ENCODE measurements at regions of chr11 and their contacts with region 1.

Region 1: GRCh38 chr11:3091791-3092602 is 34.8 kb upstream of the CARS1 start:
- DNase-seq: peak; percentile 64 to 74 (median 68)
- H3K4me3 ChIP-seq: no peak overlapping the region
- H3K4me3 Mint-ChIP-seq: no peak overlapping the region
- H3K27ac ChIP-seq: no peak overlapping the region
- H3K27ac Mint-ChIP-seq: no peak overlapping the region
- H3K4me1 ChIP-seq: no peaks in the 10 kb centered on the region
- H3K4me1 Mint-ChIP-seq: no peaks in the 10 kb centered on the region
- H3K27me3 ChIP-seq: no peaks in the 10 kb centered on the region
- H3K27me3 Mint-ChIP-seq: peaks cover 0 to 3% of the 10 kb centered on the region in 2 donors

Region 2: GRCh38 chr11:2885676-2886081 is 206.3 kb before region 1 on chr11 and contains the start of gene CDKN1C:
- CTCF ChIA-PET with region 1: interaction called, 19 read pairs
- POLR2A ChIA-PET with region 1: interaction called, 3 read pairs
- intact Hi-C with region 1: no loop called
- DNase-seq: peak; percentile 86 to 88 (median 86)
- H3K4me3 ChIP-seq: peak within 1 kb of the TSS; percentile 61 to 86
- H3K4me3 Mint-ChIP-seq: peak within 1 kb of the TSS; percentile 87 to 97 (median 94)
- H3K27ac ChIP-seq: peak within 1 kb of the TSS; percentile 10
- H3K27ac Mint-ChIP-seq: peak within 1 kb of the TSS; percentile 61 to 93 (median 84)
- H3K4me1 ChIP-seq: peaks cover 17% of the 10 kb centered on the region
- H3K4me1 Mint-ChIP-seq: peaks cover 2 to 28% (median 16%) of the 10 kb centered on the region in 4 donors
- H3K27me3 ChIP-seq: no peaks in the 10 kb centered on the region
- H3K27me3 Mint-ChIP-seq: no peaks in the 10 kb centered on the region
- total RNA-seq, gene CDKN1C: 4.9 to 6.1 TPM

Region 3: GRCh38 chr11:2930704-2931428 is 161.1 kb before region 1 on chr11:
- CTCF ChIA-PET with region 1: interaction called, 18 read pairs
- POLR2A ChIA-PET with region 1: no interaction called
- intact Hi-C with region 1: no loop called
- DNase-seq: peak in 1 of 5 donors; percentile 30
- H3K4me3 ChIP-seq: peak overlapping the region; percentile 54 to 59
- H3K4me3 Mint-ChIP-seq: peak overlapping the region; percentile 65 to 89 (median 83)
- H3K27ac ChIP-seq: no peak overlapping the region
- H3K27ac Mint-ChIP-seq: peak overlapping the region in 6 of 7 donors; percentile 78 to 92 (median 84)
- H3K4me1 ChIP-seq: peaks cover 40% of the 10 kb centered on the region
- H3K4me1 Mint-ChIP-seq: peaks cover 12 to 44% (median 17%) of the 10 kb centered on the region in 4 donors
- H3K27me3 ChIP-seq: no peaks in the 10 kb centered on the region
- H3K27me3 Mint-ChIP-seq: peaks cover 3 to 4% of the 10 kb centered on the region in 2 donors

Region 4: GRCh38 chr11:2992234-2992996 is 99.6 kb before region 1 on chr11 and contains the start of gene NAP1L4:
- CTCF ChIA-PET with region 1: no interaction called
- POLR2A ChIA-PET with region 1: no interaction called
- intact Hi-C with region 1: no loop called
- DNase-seq: peak; percentile 94 to 97 (median 95)
- H3K4me3 ChIP-seq: peak within 1 kb of the TSS; percentile 76 to 90
- H3K4me3 Mint-ChIP-seq: peak within 1 kb of the TSS; percentile 96 to 100 (median 98)
- H3K27ac ChIP-seq: peak within 1 kb of the TSS; percentile 84
- H3K27ac Mint-ChIP-seq: peak within 1 kb of the TSS; percentile 97 to 99 (median 99)
- H3K4me1 ChIP-seq: peaks cover 31% of the 10 kb centered on the region
- H3K4me1 Mint-ChIP-seq: peaks cover 12 to 57% (median 25%) of the 10 kb centered on the region in 4 donors
- H3K27me3 ChIP-seq: no peaks in the 10 kb centered on the region
- H3K27me3 Mint-ChIP-seq: peaks cover 0 to 2% of the 10 kb centered on the region in 2 donors
- total RNA-seq, gene NAP1L4: 299 to 303 TPM

Region 5: GRCh38 chr11:3014057-3014938 is 77.7 kb before region 1 on chr11:
- CTCF ChIA-PET with region 1: interaction called, 24 read pairs
- POLR2A ChIA-PET with region 1: interaction called, 3 read pairs
- intact Hi-C with region 1: no loop called
- DNase-seq: peak; percentile 88 to 93 (median 90)
- H3K4me3 ChIP-seq: peak overlapping the region in 1 of 2 donors; percentile 11
- H3K4me3 Mint-ChIP-seq: peak overlapping the region; percentile 43 to 84 (median 74)
- H3K27ac ChIP-seq: peak overlapping the region; percentile 39
- H3K27ac Mint-ChIP-seq: peak overlapping the region; percentile 85 to 95 (median 90)
- H3K4me1 ChIP-seq: peaks cover 51% of the 10 kb centered on the region
- H3K4me1 Mint-ChIP-seq: peaks cover 21 to 74% (median 37%) of the 10 kb centered on the region in 4 donors
- H3K27me3 ChIP-seq: no peaks in the 10 kb centered on the region
- H3K27me3 Mint-ChIP-seq: no peaks in the 10 kb centered on the region

Region 6: GRCh38 chr11:3049430-3050243 is 42.4 kb before region 1 on chr11:
- CTCF ChIA-PET with region 1: interaction called, 23 read pairs
- POLR2A ChIA-PET with region 1: interaction called, 12 read pairs
- intact Hi-C with region 1: loop called (anchors 1 kb)
- DNase-seq: peak; percentile 64 to 91 (median 76)
- H3K4me3 ChIP-seq: no peak overlapping the region
- H3K4me3 Mint-ChIP-seq: peak overlapping the region in 7 of 8 donors; percentile 0 to 86 (median 76)
- H3K27ac ChIP-seq: peak overlapping the region; percentile 82
- H3K27ac Mint-ChIP-seq: peak overlapping the region; percentile 92 to 99 (median 96)
- H3K4me1 ChIP-seq: peaks cover 35% of the 10 kb centered on the region
- H3K4me1 Mint-ChIP-seq: peaks cover 26 to 51% (median 38%) of the 10 kb centered on the region in 4 donors
- H3K27me3 ChIP-seq: no peaks in the 10 kb centered on the region
- H3K27me3 Mint-ChIP-seq: no peaks in the 10 kb centered on the region

Region 7: GRCh38 chr11:3123761-3124733 is 32.0 kb after region 1 on chr11:
- CTCF ChIA-PET with region 1: no interaction called
- POLR2A ChIA-PET with region 1: no interaction called
- intact Hi-C with region 1: no loop called
- DNase-seq: no peak
- H3K4me3 ChIP-seq: no peak overlapping the region
- H3K4me3 Mint-ChIP-seq: no peak overlapping the region
- H3K27ac ChIP-seq: no peak overlapping the region
- H3K27ac Mint-ChIP-seq: no peak overlapping the region
- H3K4me1 ChIP-seq: no peaks in the 10 kb centered on the region
- H3K4me1 Mint-ChIP-seq: no peaks in the 10 kb centered on the region
- H3K27me3 ChIP-seq: no peaks in the 10 kb centered on the region
- H3K27me3 Mint-ChIP-seq: no peaks in the 10 kb centered on the region